ENCODE measurements at regions of chr3 and their contacts with region 1.

Region 1: GRCh38 chr3:41234823-41235721 is 35.8 kb downstream of the CTNNB1 start:
- DNase-seq: no peak
- H3K4me3 Mint-ChIP-seq: no peak overlapping the region
- H3K27ac Mint-ChIP-seq: no peak overlapping the region
- H3K4me1 Mint-ChIP-seq: peaks cover 7% of the 10 kb centered on the region
- H3K27me3 Mint-ChIP-seq: no peaks in the 10 kb centered on the region

Region 2: DNA sequence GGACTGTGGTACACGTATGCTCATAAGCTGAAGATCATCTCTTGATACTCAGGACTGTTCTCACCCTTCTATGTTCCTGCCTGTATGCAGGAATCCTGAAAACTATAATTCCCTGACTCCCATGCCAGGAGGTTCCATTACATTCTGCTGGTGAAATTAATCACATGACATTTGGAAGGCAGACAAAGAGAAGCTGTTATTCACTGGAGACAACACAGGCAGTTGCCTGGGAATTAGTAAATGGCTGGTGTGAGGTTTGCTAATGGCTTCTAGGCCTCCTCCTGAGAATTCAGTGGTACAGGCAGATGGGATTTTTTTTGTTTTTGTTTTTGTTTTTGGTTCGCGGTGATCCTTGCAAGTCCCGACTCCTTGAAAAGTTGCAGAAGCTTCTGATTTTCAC is 55.7 kb after region 1 on chr3:
- intact Hi-C with region 1: loop called (anchors 1 kb)
- DNase-seq: no peak
- H3K4me3 Mint-ChIP-seq: no peak overlapping the region
- H3K27ac Mint-ChIP-seq: no peak overlapping the region
- H3K4me1 Mint-ChIP-seq: no peaks in the 10 kb centered on the region
- H3K27me3 Mint-ChIP-seq: peaks cover 2% of the 10 kb centered on the region

Measured in activated T-helper 1 cell treated with anti-CD3 and anti-CD28 coated beads, Interleukin-12 subunit alpha, Interleukin-12 subunit beta, Interleukin-2, Interleukin-4 antibody, amounts not matched to agents 30 ng/mL and 10 ng/mL and 1 ng/mL, durations not matched to agents 14 hours and 24 hours and 36 hours (primary cell).